Posterior vena cava (tissue), 2 donors: ENCODE measurements at regions of chr12 and their contacts with region 1.

Region 1: DNA sequence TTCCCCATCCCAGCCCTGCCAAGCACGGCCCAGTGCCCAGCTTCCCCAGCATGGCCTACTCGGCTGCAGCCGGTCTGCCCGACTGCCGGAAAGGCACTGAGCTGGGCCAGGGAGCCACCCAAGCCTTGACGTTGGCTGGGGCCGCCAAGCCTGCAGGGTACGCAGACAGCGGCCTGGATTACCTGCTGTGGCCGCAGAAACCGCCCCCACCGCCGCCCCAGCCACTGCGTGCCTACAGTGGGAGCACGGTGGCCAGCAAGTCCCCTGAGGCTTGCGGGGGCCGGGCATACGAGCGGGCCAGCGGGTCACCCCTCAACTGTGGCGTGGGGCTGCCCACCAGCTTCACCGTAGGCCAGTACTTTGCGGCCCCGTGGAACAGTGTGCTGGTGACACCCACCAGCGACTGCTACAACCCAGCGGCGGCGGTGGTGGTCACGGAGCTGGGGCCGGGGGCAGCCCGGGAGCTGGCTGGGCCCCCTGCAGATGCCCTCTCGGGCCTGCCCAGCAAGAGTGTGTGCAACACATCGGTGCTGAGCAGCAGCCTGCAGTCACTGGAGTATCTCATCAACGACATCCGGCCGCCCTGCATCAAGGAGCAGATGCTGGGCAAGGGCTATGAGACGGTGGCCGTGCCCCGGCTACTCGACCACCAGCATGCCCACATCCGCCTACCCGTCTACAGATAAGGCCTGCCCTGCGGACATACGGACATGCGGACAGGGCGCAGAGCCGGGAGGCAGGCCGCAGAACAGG is 55.2 kb downstream of the FAM222A start:
- DNase-seq: peak; percentile 77

Region 2: DNA sequence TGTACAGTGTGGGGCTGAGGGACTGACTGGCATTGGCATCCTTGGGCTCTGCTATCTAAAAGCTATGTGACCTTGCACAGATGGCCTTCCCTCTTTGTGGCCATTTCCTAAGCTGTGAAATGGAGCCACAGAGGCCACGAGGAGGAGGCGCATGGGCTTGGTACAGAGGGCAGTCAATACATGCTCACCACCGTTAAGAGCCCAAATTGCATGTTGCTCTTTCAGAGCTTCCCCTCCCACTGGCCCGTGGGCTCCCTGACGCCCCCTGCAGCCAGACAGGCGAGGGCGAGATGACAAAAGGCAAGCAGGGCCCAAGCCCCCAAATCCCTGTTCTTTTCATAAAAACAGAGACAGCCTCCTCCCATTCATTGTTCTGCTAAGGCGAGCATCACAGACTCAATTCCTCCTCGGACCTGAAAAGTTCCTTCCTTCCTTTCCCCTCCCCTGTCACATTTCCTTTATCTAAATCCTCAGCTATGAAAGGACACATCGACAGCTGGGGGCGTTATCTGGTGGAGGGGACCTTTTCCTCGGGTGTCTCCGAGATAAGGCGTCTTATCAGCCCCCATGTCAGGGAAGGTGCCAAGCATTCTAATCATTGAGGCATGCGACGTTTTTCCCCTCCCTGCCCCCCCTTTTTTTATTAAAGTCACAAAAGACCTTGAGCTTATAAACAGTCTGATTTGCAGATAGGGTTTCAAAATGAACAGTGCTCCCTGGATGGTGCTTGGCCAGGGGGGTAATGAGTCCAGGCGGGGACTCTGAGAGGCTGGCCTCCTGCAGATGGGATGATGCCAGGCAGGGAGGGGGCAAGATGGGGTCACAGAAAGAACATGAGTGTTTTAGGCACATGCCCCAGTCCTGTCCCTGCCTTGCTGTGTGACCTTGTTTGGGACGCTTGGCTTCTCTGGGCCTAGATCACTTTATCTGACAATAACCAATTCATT is 28.8 kb before region 1 on chr12:
- intact Hi-C with region 1: loop called in 1 of 2 experiments (anchors 1 kb)
- DNase-seq: peak; percentile 42

Region 3: DNA sequence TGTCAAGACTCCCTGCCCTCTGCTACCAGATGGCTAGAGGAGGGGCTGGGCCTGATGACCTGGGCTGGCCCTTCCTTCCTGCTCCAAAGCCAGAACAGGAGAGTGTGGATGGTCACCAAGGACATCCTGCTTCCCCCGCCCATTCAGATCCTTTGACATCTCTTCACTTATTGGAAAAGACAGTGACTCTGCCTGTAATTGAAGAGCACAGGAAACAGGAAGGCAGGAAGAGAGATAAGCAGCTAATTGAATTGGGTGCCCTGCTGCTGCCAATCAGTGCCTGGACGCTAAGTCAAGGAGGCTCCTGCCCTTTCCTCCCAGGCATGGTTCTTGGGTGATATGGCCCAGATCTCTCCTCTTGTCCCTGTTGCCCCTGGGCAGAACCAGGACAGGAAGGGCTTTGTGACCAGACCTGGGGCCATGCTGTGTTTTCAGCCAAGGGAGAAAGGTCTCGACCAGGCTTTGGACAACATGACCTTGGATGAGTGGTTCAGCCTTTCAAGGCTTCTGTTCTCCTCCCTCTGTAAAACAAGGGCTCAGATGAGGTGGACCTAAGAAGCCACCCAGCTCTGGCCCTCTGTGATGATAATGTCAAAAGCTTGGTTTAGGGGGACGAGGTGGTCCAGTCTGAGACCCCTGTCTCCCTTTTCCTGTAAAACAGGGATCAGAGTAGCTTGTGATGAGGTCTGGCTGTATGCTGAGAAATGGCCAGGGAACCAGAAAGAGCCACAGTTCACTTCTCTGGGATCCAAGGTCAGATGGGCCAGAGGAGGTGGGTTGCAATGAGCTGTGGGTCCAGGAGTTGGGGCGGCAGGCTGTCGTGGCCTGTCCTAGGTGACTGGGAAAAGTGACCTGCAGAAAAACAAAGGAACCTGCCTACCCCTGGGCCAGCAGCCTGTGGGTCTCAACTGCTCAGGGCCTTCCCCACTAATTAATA is 16.4 kb before region 1 on chr12:
- intact Hi-C with region 1: no loop called
- DNase-seq: peak; percentile 34

Region 4: DNA sequence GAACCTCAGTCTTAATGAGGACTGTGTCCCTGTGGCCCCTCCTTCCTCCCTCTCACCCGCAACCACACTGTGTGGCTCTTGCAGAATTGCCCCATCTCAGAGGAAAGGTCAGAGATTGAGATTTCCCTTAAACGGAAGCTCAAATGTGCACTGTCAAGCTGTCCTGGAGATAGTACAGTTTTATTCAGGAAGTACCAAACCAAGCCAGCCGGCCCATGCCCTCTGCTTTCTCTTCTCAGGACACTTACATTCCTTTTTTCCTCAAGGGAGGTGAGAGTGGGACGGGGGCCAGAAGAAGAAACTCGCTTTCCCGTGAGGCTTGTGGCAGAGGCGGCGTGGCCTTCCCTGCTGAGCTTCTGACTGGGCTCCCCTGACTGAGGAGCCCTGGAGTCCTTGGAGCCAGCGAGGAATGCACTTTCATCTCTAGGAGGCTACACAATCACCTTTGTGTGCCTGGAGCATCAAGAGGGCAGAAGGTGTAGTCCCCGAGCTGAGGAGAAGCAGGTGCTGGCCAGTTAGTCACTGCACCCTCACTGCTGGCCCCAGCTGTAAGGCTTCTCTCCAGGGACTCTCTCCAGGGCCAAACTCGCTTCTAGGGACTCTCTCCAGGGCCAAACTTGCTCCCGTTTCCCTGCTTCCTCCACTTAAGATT is 488.1 kb after region 1 on chr12:
- intact Hi-C with region 1: no loop called
- DNase-seq: no peak